GM12878 (cell line): ENCODE measurements at regions of chr6 and their contacts with region 1.

Region 1: DNA sequence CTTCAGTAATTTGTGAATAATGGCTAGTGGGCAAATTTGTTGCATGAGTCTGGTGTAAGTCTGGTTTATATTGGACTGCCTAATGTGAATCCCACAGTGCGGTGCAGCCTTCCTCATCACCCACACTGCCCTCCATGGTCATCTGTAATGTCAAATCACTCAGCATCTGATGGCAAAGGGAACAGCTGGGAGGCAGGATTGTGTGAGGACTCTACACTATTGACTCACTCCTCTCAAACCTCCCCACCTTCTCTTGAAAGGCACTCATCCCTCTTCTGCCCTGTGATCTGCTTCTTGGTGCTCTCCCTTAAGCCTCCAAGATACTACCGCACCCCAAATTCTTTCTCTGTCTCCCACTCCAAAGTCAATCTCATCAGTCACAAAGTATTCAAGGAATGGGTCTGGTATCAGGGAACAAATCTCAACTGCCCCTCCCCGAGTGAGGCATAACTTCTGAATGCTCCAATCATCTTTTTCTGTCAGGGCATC is 146.0 kb upstream of the BEND6 start:
- DNase-seq: no peak
- ATAC-seq: peak; percentile 67
- H3K4me3 ChIP-seq: no peak overlapping the region
- H3K27ac ChIP-seq: 0 out of 2 replicates have a peak overlapping the region, but pooled peaks have one; percentile 6
- H3K4me1 ChIP-seq: peaks cover 38% of the 10 kb centered on the region
- H3K27me3 ChIP-seq: no peaks in the 10 kb centered on the region
- CTCF ChIP-seq: no peak
- EP300 ChIP-seq: no peak
- POLR2A ChIP-seq: no peak
- RAD21 ChIP-seq: no peak

Region 2: DNA sequence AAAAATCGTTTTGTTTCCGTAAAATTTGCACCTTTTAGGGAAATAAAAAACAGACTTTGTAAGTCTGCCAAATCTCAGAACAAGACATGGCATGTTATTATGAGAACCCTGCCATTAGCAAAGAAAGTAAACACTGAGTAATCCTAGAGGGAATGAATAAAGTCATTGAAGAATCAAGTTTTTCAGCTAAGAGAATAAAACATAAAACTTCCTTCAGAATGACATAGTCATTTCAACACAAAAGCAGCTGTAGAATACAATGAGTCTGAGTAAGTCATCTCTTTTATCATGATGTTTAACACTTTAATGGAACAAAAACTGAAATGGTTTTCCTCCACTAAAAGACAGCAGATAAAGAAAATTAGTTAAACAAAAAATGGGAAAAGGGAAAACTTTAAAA is 155.9 kb before region 1 on chr6:
- CTCF ChIA-PET with region 1: no interaction called
- POLR2A ChIA-PET with region 1: no interaction called
- RAD21 ChIA-PET with region 1: no interaction called
- SMC1A ChIA-PET with region 1: no interaction called
- in situ Hi-C with region 1: no loop called
- intact Hi-C with region 1: no loop called
- DNase-seq: no peak
- ATAC-seq: no peak
- H3K4me3 ChIP-seq: no peak overlapping the region
- H3K27ac ChIP-seq: no peak overlapping the region
- H3K4me1 ChIP-seq: no peaks in the 10 kb centered on the region
- H3K27me3 ChIP-seq: no peaks in the 10 kb centered on the region
- CTCF ChIP-seq: no peak
- EP300 ChIP-seq: no peak
- POLR2A ChIP-seq: no peak
- RAD21 ChIP-seq: no peak

Region 3: GRCh38 chr6:56742122-56742791 is 66.7 kb before region 1 on chr6:
- CTCF ChIA-PET with region 1: no interaction called
- POLR2A ChIA-PET with region 1: no interaction called
- RAD21 ChIA-PET with region 1: no interaction called
- SMC1A ChIA-PET with region 1: no interaction called
- in situ Hi-C with region 1: no loop called
- intact Hi-C with region 1: no loop called
- DNase-seq: no peak
- ATAC-seq: peak; percentile 83
- H3K4me3 ChIP-seq: peak overlapping the region; percentile 17; the same call in 1 of the 2 replicates
- H3K27ac ChIP-seq: peak overlapping the region; percentile 50
- H3K4me1 ChIP-seq: peaks cover 20% of the 10 kb centered on the region
- H3K27me3 ChIP-seq: no peaks in the 10 kb centered on the region
- CTCF ChIP-seq: no peak
- EP300 ChIP-seq: no peak
- POLR2A ChIP-seq: no peak
- RAD21 ChIP-seq: no peak

Region 4: DNA sequence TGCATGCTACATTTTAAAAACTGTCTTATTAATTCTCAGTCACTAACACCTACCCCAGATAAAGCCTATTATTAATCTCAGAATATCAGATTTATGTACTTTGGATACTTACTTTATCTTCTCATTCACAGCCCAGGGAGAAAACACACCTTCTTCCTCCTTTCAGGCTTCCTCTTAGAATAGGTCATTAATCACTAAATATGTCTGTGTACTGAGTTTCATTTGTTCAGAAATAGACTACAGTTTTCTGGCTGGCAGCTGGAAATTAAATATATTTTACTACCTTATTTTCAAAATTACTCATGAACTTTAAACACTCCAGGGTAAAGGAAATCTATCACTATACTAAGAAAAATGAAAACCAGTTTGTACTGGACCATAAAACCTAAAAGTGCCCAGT is 18.5 kb before region 1 on chr6:
- CTCF ChIA-PET with region 1: interaction called, 7 read pairs
- POLR2A ChIA-PET with region 1: interaction called, 3 read pairs
- RAD21 ChIA-PET with region 1: interaction called, 5 read pairs
- SMC1A ChIA-PET with region 1: interaction called, 14 read pairs
- in situ Hi-C with region 1: no loop called
- intact Hi-C with region 1: no loop called
- DNase-seq: no peak
- ATAC-seq: peak; percentile 72
- H3K4me3 ChIP-seq: no peak overlapping the region
- H3K27ac ChIP-seq: peak overlapping the region; percentile 82
- H3K4me1 ChIP-seq: peaks cover 41% of the 10 kb centered on the region
- H3K27me3 ChIP-seq: no peaks in the 10 kb centered on the region
- CTCF ChIP-seq: no peak
- EP300 ChIP-seq: peak in 1 of 2 experiments; percentile 65; a peak in 1 of 4 replicates
- POLR2A ChIP-seq: no peak
- RAD21 ChIP-seq: no peak

Region 5: GRCh38 chr6:56796196-56796532 is 12.8 kb before region 1 on chr6:
- CTCF ChIA-PET with region 1: interaction called, 7 read pairs
- POLR2A ChIA-PET with region 1: interaction called, 9 read pairs
- RAD21 ChIA-PET with region 1: interaction called, 5 read pairs
- SMC1A ChIA-PET with region 1: interaction called, 14 read pairs
- in situ Hi-C with region 1: no loop called
- intact Hi-C with region 1: no loop called
- DNase-seq: no peak
- ATAC-seq: peak; percentile 71
- H3K4me3 ChIP-seq: no peak overlapping the region
- H3K27ac ChIP-seq: 0 out of 2 replicates have a peak overlapping the region, but pooled peaks have one; percentile 47
- H3K4me1 ChIP-seq: peaks cover 49% of the 10 kb centered on the region
- H3K27me3 ChIP-seq: no peaks in the 10 kb centered on the region
- CTCF ChIP-seq: no peak
- EP300 ChIP-seq: peak in 1 of 2 experiments; percentile 34; a peak in 1 of 4 replicates
- POLR2A ChIP-seq: no peak
- RAD21 ChIP-seq: no peak

Region 6: DNA sequence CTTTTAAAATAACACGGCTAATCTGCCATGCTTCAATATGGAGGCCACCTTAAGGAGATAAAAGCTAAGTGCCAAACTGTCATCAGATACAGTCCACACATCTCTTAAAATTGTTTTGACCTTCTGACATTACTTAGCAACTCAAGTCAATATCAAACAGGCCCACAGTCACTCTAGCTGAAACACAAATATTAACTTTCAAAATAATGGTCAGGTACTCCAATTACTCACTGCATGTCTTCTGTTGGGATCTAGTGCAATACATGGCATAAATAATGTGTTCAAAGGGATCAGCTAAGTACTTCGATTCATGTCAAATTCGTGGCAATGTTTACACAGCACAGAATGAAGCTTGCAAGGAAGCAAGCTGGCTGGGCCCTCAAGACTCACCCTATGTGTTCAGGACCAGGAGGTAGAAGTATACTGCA is 12.1 kb after region 1 on chr6:
- CTCF ChIA-PET with region 1: interaction called, 8 read pairs
- POLR2A ChIA-PET with region 1: interaction called, 6 read pairs
- RAD21 ChIA-PET with region 1: interaction called, 6 read pairs
- SMC1A ChIA-PET with region 1: interaction called, 20 read pairs
- in situ Hi-C with region 1: no loop called
- intact Hi-C with region 1: no loop called
- DNase-seq: no peak
- ATAC-seq: peak; percentile 47
- H3K4me3 ChIP-seq: no peak overlapping the region
- H3K27ac ChIP-seq: no peak overlapping the region
- H3K4me1 ChIP-seq: peaks cover 6% of the 10 kb centered on the region; the same call in 1 of the 2 replicates
- H3K27me3 ChIP-seq: no peaks in the 10 kb centered on the region
- CTCF ChIP-seq: no peak
- EP300 ChIP-seq: no peak
- POLR2A ChIP-seq: no peak
- RAD21 ChIP-seq: no peak